ENCODE measurements at regions of chr13 and their contacts with region 1.

Region 1: DNA sequence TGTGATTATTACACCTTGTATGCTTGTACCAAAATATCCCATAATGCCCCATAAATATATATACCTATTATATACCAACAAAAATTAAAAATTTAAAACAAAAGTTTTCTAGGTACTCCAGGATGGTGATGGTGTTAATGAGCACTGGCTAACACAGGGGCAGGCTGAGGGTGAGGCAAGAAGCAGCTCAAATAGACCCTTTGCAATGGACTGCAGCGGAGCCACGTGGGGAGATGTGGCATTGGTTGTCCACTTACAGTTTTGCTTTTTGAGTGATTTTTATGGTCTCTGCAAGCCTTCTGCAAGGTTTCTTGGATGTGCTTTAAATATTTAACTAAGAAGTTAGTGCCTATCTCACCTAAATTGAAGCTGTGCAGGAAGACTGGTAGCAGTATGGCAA is 132.9 kb downstream of the RAP2A start:
- DNase-seq: no peak
- H3K4me3 ChIP-seq: no peak overlapping the region
- H3K27ac ChIP-seq: no peak overlapping the region
- H3K27me3 ChIP-seq: peaks cover 9% of the 10 kb centered on the region
- CTCF ChIP-seq: no peak

Region 2: DNA sequence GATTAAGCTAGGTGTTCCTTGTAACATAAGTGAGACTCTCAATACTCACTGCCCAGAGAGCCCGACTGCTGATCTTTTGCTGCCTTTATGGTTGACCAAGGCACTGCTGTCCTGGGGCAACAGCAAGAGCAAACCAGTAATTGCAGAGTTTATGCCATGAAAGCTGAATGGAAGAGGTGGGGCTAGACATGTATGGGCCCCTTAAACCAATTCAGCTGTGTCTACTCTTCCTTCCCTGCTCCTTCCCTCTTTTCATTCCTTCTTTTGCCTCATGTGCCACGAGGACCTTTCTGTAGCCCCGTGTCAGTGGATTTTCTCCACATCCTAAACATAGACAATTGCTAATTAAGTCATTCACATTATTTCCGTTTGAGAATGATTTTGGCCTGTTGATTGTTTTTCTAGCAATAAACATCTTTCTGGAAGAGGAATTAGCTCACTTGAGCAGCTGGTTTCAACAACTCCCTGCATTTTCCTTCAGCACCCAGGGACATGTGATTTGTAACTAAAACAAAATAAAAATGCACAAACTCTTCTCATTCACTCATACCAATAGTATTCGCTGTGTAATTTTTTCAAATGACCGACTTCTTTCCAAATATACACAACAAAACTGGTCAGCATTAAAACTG is 92.4 kb before region 1 on chr13:
- CTCF ChIA-PET with region 1: no interaction called
- POLR2A ChIA-PET with region 1: interaction called, 14 read pairs
- DNase-seq: peak; percentile 8
- H3K4me3 ChIP-seq: no peak overlapping the region
- H3K27ac ChIP-seq: peak overlapping the region; percentile 49
- H3K27me3 ChIP-seq: no peaks in the 10 kb centered on the region
- CTCF ChIP-seq: no peak

Region 3: GRCh38 chr13:97653443-97654140 is 86.7 kb after region 1 on chr13:
- CTCF ChIA-PET with region 1: no interaction called
- POLR2A ChIA-PET with region 1: no interaction called
- DNase-seq: peak; percentile 15
- H3K4me3 ChIP-seq: no peak overlapping the region
- H3K27ac ChIP-seq: no peak overlapping the region
- H3K27me3 ChIP-seq: peaks cover 5% of the 10 kb centered on the region
- CTCF ChIP-seq: no peak

Measured in AG04450 (cell line).